Transverse colon (tissue), 4 donors: ENCODE measurements at regions of chr7 and their contacts with region 1.

Region 1: DNA sequence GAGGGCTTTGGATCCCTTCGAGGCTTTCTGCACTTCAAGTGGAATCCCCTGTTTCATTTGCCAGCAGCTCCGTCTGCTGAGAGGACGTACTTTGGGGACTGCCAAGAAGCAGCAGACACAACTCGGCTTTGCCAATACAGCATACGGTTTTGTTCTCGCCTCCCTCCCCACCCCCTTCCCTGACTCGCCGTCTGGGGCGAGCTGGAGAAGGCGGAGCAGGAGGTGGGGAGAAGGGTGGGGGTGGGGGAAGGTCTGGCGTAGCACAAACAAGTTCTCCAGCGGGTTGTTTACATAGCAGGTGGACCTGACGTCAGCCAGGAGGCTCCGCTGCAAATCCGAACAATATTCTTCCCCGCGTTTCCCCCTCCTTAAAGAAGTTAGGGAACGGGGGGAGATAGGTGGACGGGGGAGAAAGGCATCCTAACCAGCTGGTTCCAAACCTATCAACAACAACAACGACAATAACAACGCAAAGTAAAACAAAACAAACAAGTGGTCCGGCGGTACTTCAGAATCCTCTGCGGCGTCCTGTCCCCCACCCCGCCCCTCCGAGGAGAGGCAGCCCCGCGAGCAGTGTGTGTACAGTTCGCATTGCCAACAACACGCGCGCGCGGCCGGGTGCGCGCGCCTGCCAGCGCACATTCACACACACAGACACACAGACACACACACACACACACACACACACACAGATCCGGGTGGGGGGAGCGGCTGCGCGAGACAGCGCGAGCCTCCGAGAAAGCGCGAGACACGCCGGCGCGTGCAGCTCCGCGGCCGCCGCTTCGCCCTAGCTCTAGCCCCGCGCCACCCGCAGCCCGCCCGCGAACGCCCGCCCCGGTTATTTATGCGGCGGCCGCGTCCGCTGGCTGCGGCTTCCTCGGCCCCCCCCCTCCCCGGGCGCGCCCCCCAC is 167.0 kb upstream of the PPP1R3A start:
- DNase-seq: peak; percentile 90
- H3K4me3 ChIP-seq: peak overlapping the region; percentile 65 to 85 (median 70)
- H3K27ac ChIP-seq: peak overlapping the region; percentile 95 to 98 (median 96)
- H3K4me1 ChIP-seq: peaks cover 0 to 65% (median 24%) of the 10 kb centered on the region in 4 donors
- H3K27me3 ChIP-seq: peaks cover 50% of the 10 kb centered on the region
- CTCF ChIP-seq: no peak
- EP300 ChIP-seq: peak; percentile 7
- POLR2A ChIP-seq: peak; percentile 82

Region 2: GRCh38 chr7:114405427-114405826 is 319.6 kb after region 1 on chr7:
- in situ Hi-C with region 1: loop called in 3 of 4 experiments (anchors 10 to 25 kb)
- intact Hi-C with region 1: loop called (anchors 5 kb)
- DNase-seq: no peak
- H3K4me3 ChIP-seq: no peak overlapping the region
- H3K27ac ChIP-seq: no peak overlapping the region
- H3K4me1 ChIP-seq: peaks cover 0 to 27% (median 19%) of the 10 kb centered on the region in 4 donors
- H3K27me3 ChIP-seq: no peaks in the 10 kb centered on the region
- CTCF ChIP-seq: peak; percentile 46 to 73 (median 54)
- EP300 ChIP-seq: no peak
- POLR2A ChIP-seq: no peak

Region 3: DNA sequence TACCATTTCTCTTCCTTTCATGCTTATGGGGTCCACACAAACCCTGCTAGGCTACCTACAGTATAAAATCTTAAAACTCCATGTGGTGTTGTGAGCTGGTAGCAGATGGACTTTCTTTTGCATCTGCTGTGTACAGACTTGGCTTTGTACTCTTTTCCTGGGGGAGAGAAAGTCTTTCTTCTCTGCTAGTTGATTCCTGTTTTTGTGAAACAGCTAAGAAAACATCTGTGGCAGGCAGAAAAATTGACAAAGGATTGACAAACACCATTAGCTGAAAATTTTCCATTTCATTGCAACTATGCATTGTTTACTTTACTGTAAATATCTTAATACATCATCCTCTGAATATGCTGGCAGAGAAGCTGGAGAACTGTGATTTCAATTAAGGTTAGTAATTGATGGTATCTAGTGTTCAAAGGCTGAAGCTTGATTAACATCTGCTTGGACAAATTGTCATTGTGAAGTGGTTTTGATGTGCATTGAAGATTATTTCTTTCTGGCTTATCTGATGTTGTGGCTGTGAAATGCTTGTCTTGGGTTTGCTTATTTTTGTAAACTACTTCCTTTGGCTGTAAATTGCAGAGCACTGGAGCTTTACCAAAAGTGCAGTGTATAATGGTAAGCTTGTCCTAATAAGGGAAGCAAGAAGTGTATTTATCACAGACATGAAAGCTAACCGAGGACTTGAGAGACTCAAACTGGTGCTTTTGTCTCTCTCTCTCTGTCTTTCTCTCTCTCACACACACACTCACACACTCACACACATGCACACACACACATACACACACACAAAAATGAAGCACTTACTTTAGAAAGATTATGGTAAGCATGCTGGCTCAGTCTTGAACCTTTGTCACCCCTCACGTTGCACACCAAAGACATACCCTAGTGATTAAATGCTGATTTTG is 328.6 kb after region 1 on chr7 and contains the start of gene FOXP2:
- in situ Hi-C with region 1: loop called in 3 of 4 experiments (anchors 10 to 25 kb)
- intact Hi-C with region 1: loop called (anchors 5 kb)
- DNase-seq: no peak
- H3K4me3 ChIP-seq: peak within 1 kb of the TSS; percentile 19 to 41 (median 26)
- H3K27ac ChIP-seq: peak within 1 kb of the TSS; percentile 67 to 85 (median 72)
- H3K4me1 ChIP-seq: peaks cover 9 to 36% (median 11%) of the 10 kb centered on the region in 4 donors
- H3K27me3 ChIP-seq: no peaks in the 10 kb centered on the region
- CTCF ChIP-seq: no peak
- EP300 ChIP-seq: no peak
- POLR2A ChIP-seq: no peak
- total RNA-seq, gene FOXP2: 20.5 to 102 (median 34.0) TPM

Region 4: GRCh38 chr7:114539575-114539974 is 453.7 kb after region 1 on chr7:
- in situ Hi-C with region 1: loop called in 1 of 4 experiments (anchors 25 kb)
- intact Hi-C with region 1: no loop called
- DNase-seq: peak; percentile 7
- H3K4me3 ChIP-seq: no peak overlapping the region
- H3K27ac ChIP-seq: no peak overlapping the region
- H3K4me1 ChIP-seq: peaks cover 0 to 11% (median 4%) of the 10 kb centered on the region in 4 donors
- H3K27me3 ChIP-seq: no peaks in the 10 kb centered on the region
- CTCF ChIP-seq: peak in 1 of 5 experiments; percentile 22
- EP300 ChIP-seq: no peak
- POLR2A ChIP-seq: no peak

Region 5: DNA sequence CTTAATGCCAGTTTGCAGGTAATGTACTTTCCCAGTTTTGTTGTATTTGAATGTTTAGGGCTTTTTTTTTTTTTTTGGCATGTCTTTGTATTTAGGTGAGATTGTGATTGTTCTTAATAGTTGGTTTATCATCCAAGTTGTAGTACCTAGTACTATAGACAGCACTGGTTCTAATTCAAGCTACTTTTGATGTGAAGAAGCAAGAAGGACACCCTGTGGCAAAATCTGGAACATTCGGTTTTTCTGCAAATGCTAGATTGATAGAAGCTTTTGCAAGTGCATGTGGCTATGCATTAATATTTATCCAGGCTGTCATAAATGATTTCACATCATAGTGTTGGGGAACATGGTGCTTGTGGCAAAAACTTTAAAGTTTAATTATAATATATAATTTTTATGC is 577.7 kb after region 1 on chr7:
- in situ Hi-C with region 1: loop called in 1 of 4 experiments (anchors 25 kb)
- intact Hi-C with region 1: loop called (anchors 10 kb)
- DNase-seq: peak; percentile 8
- H3K4me3 ChIP-seq: no peak overlapping the region
- H3K27ac ChIP-seq: no peak overlapping the region
- H3K4me1 ChIP-seq: no peaks in the 10 kb centered on the region
- H3K27me3 ChIP-seq: no peaks in the 10 kb centered on the region
- CTCF ChIP-seq: peak in 4 of 5 experiments; percentile 19 to 44 (median 28)
- EP300 ChIP-seq: no peak
- POLR2A ChIP-seq: no peak

Region 6: DNA sequence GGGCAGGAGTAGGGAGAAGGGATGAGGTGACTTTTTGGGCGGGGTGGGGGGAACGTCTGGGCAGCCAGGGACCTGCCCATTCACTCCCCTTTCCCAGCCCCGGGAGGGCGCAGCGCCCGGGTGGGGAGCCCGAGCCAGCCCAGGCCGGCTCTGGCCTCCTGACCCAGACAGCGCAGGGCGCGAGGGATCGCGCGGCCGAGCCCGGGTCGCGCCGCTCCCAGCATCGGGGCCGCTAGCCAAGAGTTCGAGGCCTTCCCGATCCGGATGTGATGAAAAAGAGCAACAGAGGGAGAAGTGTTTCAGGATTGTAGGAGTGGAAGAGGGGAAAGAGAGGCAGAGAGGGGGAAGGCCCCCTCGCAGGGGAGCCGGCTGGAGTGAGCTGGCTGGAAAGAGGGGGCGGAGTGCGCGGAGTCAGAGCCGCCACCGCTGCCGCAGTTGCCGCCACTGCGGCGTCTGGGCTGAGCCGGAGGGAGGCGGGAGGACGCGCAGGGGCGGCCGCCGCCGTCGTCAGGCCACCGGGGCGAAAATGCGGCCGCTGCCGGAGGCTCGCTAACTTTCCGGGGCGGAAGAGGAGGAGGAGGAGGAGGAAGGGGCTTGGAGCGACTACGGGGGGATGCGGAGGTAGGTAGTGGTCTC is 836.3 kb after region 1 on chr7 and contains the start of gene MDFIC:
- in situ Hi-C with region 1: no loop called
- intact Hi-C with region 1: loop called (anchors 10 kb)
- DNase-seq: peak; percentile 46
- H3K4me3 ChIP-seq: peak within 1 kb of the TSS; percentile 63 to 97 (median 73)
- H3K27ac ChIP-seq: peak within 1 kb of the TSS; percentile 85 to 92 (median 90)
- H3K4me1 ChIP-seq: peaks cover 0 to 14% (median 12%) of the 10 kb centered on the region in 4 donors
- H3K27me3 ChIP-seq: no peaks in the 10 kb centered on the region
- CTCF ChIP-seq: no peak
- EP300 ChIP-seq: no peak
- POLR2A ChIP-seq: peak; percentile 60
- total RNA-seq, gene MDFIC: 4.5 to 14.8 (median 9.6) TPM